GM18951 (cell line): ENCODE measurements at regions of chr10 and their contacts with region 1.

Region 1: GRCh38 chr10:23158370-23158769 is 33.7 kb upstream of the PTF1A start:
- POLR2A ChIP-seq: no peak

Region 2: DNA sequence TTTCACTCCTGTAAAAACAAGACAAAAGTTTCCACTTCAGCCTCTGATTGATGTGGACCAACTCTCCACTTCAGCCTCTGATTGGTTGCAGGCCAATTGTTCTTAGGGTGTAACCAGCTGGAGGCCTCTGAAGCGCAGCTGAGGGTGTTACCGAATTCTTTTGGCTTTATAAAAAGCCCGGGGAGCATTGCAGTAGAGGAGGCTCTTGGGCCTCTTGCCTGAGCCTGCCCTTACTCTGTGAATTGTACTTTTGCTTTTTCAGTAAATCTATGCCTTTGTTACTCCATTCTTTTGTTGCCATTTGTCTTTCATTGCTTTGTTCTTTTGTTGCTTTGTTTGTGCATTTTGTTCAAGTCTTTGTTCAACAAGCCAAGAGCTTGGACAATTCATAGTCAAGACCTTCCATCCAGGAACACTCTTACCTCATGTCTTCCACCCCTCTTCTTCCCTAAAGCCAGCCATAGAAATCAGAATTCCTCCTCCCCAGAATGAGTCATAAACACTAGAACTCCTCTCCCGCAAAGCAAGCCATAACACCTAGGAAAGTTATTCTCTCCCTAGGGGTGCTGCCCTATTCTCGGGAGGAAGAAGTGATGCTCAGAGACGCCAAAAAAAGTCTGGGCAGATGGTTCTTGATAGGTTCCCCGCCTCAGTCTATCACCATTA is 284.0 kb before region 1 on chr10:
- in situ Hi-C with region 1: no loop called
- POLR2A ChIP-seq: no peak

Region 3: DNA sequence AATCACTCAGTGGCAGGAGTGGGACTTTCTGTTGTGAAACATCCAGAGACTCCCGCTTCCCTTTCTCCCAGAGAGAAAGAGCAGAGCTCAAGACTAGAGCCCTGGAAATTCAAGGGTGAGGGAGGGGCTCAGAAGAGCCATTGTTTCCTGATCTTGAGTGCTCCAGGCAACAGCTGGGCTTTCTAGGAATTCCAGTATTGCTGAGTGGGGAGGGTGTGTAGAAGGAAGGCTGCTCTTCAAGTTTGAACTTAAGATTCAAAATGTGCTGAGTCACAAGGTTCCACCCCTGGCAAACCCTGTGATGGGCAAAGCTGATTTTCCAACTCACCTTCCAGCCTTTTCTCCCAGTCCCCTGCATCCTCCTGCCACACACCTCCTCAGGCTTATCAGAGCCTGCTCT is 105.3 kb before region 1 on chr10:
- in situ Hi-C with region 1: no loop called
- POLR2A ChIP-seq: no peak

Region 4: DNA sequence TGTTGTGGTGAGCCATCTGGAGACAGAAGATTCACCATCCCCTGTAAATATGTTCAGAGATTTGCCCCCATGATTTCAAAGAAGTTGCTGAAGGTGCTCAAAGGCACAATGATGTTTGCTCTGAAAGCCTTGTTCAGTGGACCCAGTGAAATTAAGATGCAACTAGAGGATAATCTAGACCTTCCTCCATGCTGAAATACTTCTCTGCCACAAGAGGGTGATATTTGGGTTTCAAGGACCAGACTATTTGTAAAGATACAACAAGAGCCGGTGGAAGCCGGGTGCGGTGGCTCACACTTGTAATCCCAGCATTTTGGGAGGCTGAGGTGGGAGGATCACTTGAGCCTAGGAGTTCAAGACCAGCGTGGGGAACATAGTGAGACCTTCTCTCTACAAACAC is 76.5 kb before region 1 on chr10:
- in situ Hi-C with region 1: no loop called
- POLR2A ChIP-seq: no peak

Region 5: GRCh38 chr10:23293145-23293724 is 134.9 kb after region 1 on chr10:
- in situ Hi-C with region 1: loop called (anchors 25 kb)
- POLR2A ChIP-seq: no peak

Region 6: DNA sequence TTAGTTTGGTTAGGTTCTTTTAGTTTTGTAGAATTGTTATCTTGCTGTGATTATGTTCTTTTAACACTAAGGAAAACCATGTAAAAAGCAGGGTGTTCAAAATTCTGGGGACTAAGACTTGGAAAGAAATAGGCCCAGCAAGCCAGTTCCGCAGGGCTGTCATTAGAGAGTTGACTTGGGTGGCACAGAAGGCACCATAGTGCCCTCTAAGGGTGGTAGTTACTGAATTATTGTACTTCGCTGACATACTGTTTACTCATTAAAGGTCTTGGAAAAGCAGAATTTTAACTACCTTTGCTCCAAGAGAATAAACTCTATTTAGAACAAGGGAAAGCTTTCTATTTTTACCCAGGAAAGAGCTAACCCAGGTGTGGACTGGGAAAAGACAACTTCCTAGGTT is 367.0 kb after region 1 on chr10:
- in situ Hi-C with region 1: loop called (anchors 25 kb)
- POLR2A ChIP-seq: no peak

Region 7: DNA sequence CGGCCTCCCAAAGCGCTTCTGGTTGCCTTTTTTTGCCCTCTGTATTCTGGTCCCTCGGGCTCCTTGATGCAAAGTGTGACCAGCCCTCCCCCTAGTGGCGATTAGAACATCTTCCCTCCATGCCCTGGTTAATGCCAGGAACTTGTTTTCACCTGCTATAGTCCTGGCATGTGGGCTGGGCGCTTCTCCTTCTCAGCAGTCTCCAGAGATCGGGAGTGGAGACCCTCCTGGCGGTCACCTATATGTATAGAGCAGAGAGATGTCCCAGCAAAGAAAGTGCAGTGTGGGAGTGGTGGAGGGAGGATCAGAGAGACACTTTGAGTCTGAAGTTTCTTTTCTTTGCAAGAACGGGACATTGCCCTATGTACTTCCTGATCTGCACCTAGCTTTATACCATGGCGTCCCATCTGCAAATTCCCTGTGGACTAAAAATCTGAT is 544.6 kb after region 1 on chr10:
- in situ Hi-C with region 1: loop called (anchors 10 kb)
- POLR2A ChIP-seq: no peak